ENCODE measurements at regions of chr1 and their contacts with region 1.

Region 1: GRCh38 chr1:147545133-147545532 is 3.8 kb downstream of the BCL9 start:
- DNase-seq: peak; percentile 89
- H3K4me3 Mint-ChIP-seq: peak overlapping the region; percentile 5
- H3K27ac Mint-ChIP-seq: peak overlapping the region; percentile 50
- H3K4me1 Mint-ChIP-seq: peaks cover 50% of the 10 kb centered on the region
- H3K27me3 Mint-ChIP-seq: peaks cover 7% of the 10 kb centered on the region

Region 2: GRCh38 chr1:147486856-147487255 is 58.3 kb before region 1 on chr1:
- CTCF ChIA-PET with region 1: no interaction called
- POLR2A ChIA-PET with region 1: no interaction called
- DNase-seq: no peak
- H3K4me3 Mint-ChIP-seq: no peak overlapping the region
- H3K27ac Mint-ChIP-seq: no peak overlapping the region
- H3K4me1 Mint-ChIP-seq: no peaks in the 10 kb centered on the region
- H3K27me3 Mint-ChIP-seq: peaks cover 17% of the 10 kb centered on the region

Region 3: DNA sequence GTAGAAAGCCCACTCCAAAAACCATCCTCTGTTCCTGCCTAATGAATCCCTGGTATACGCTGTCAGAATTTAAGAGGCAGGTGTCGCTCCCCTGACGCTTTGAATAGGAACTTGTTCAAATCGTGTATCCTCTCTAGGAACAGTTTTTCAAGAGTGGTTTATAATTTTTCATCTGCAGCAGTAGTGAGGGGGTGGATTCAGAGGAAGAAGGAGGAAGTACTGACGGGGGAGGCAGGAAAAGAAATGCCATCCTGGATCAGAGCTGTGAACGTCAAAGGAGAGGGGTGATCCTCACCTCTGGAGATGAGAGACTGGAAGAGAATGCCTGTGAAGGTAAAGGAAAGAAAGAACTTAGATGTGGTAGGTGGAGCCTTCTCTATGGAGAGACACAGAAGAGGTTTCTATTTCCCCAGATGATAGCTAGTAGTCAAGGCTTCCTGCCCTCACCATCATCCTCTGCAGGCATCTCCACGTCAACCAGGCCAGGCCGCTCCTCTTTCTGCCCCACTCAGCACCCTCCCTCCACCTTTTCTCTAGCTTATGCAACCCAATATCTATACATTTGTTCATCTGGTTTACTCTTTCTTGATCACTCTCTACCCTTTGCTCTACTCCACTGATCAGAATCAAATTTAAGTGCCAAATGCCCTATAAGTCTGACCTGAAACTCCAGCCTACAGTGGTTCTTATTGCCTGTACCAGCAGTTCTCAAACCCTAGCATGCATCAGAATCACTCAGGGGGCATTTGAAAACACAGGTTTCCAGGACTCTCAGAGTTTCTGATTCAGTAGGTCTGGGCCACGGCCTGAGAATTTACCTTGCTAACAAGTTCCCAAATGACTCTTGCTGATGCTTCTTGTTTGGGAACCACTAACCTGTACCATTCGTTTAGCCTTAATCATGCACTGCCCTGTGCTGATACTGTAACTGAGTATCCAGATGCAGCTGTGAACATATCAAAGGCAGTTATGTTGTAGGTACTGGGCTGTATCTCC is 16.9 kb before region 1 on chr1:
- CTCF ChIA-PET with region 1: interaction called, 3 read pairs
- POLR2A ChIA-PET with region 1: interaction called, 11 read pairs
- DNase-seq: no peak
- H3K4me3 Mint-ChIP-seq: no peak overlapping the region
- H3K27ac Mint-ChIP-seq: no peak overlapping the region
- H3K4me1 Mint-ChIP-seq: no peaks in the 10 kb centered on the region
- H3K27me3 Mint-ChIP-seq: peaks cover 5% of the 10 kb centered on the region

Region 4: DNA sequence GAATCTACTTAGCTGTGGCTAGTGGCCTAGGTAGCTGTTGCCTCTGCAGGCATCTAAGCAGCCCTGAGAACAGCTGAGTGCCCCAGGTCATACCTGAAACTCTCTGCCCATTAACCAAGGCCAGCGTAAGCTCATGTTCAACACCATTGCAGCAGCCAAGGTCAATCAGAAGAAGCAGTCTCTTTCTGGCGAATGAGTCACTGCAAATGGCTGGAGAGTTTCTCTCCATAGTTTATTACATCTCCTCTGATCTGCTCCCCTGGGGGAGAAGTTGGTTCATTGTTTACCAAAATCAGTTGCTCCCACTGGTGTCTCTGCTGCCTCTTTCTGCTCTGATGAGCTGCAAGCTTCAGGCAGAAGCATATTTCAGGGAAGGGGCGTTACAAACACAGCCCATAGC is 10.7 kb before region 1 on chr1:
- CTCF ChIA-PET with region 1: no interaction called
- POLR2A ChIA-PET with region 1: interaction called, 14 read pairs
- DNase-seq: no peak
- H3K4me3 Mint-ChIP-seq: no peak overlapping the region
- H3K27ac Mint-ChIP-seq: no peak overlapping the region
- H3K4me1 Mint-ChIP-seq: no peaks in the 10 kb centered on the region
- H3K27me3 Mint-ChIP-seq: peaks cover 14% of the 10 kb centered on the region

Region 5: DNA sequence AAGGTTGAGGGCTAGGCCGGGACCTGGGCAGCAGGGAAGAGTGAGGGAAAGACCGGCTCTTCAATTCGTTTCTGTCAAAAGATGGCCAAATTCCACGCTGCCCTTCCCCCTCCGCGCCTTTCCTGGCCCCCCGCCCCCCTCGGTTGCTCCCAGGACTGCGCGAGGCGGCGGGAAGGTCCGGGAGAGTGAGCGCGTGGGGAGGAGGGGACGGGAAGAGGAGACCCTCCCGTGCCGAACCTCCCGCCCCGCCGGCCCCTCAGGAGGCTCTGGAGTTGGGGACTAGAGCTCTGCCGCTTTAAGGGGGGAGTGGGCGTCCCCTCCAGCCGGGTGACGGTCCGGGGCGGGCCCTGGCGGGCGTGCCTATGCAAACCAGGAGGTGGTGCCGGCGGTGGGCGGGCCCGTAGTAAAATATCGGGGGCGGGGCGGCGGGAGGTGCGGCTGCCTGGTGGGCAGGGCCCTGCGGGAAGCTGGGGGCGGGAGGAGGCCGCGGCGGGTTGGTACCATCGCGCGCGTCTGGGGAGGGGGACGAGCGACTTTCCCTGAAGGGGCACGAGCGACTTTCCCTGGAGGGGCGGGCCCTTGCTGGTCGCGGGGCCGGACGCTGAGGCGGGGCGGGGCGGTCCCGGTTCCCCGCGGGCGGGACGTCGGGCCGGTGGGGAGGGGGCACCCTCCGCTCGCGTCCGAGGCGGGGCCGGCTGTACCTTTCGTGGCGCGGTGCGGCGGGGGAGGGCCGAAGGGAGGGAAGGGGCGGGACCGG is 54.4 kb after region 1 on chr1:
- CTCF ChIA-PET with region 1: interaction called, 10 read pairs
- POLR2A ChIA-PET with region 1: interaction called, 33 read pairs
- DNase-seq: peak; percentile 95
- H3K4me3 Mint-ChIP-seq: peak overlapping the region; percentile 87
- H3K27ac Mint-ChIP-seq: no peak overlapping the region
- H3K4me1 Mint-ChIP-seq: peaks cover 27% of the 10 kb centered on the region
- H3K27me3 Mint-ChIP-seq: peaks cover 22% of the 10 kb centered on the region